Endothelial cell of umbilical vein (primary cell): ENCODE measurements at regions of chr21 and their contacts with region 1.

Region 1: GRCh38 chr21:43333298-43334062 is 93.5 kb downstream of the SIK1 start:
- DNase-seq: peak; percentile 58
- H3K4me3 ChIP-seq: no peak overlapping the region
- H3K27ac ChIP-seq: peak overlapping the region; percentile 49
- H3K4me1 ChIP-seq: peaks cover 19% of the 10 kb centered on the region
- H3K27me3 ChIP-seq: no peaks in the 10 kb centered on the region
- CTCF ChIP-seq: no peak
- POLR2A ChIP-seq: no peak

Region 2: GRCh38 chr21:43345746-43346409 is 12.4 kb after region 1 on chr21:
- CTCF ChIA-PET with region 1: interaction called, 3 read pairs
- POLR2A ChIA-PET with region 1: no interaction called
- dilution Hi-C with region 1: no loop called
- intact Hi-C with region 1: loop called (anchors 2 kb)
- DNase-seq: peak; percentile 50
- H3K4me3 ChIP-seq: no peak overlapping the region
- H3K27ac ChIP-seq: peak overlapping the region; percentile 31
- H3K4me1 ChIP-seq: peaks cover 21% of the 10 kb centered on the region
- H3K27me3 ChIP-seq: no peaks in the 10 kb centered on the region
- CTCF ChIP-seq: no peak
- POLR2A ChIP-seq: no peak

Region 3: GRCh38 chr21:43659136-43660000 is 325.9 kb after region 1 on chr21 and contains the starts of genes HSF2BP and RRP1B:
- CTCF ChIA-PET with region 1: no interaction called
- POLR2A ChIA-PET with region 1: no interaction called
- dilution Hi-C with region 1: no loop called
- intact Hi-C with region 1: loop called (anchors 5 kb)
- DNase-seq: peak; percentile 80
- H3K4me3 ChIP-seq: peak within 1 kb of the TSS; percentile 85 to 94 (median 92)
- H3K27ac ChIP-seq: peak within 1 kb of the TSS; percentile 77
- H3K4me1 ChIP-seq: peaks cover 55% of the 10 kb centered on the region
- H3K27me3 ChIP-seq: no peaks in the 10 kb centered on the region
- CTCF ChIP-seq: no peak
- POLR2A ChIP-seq: peak; percentile 86
- total RNA-seq, gene HSF2BP: 0.55 and 0.67 TPM in 2 replicates
- total RNA-seq, gene RRP1B: 39.9 and 40.1 TPM in 2 replicates